ENCODE measurements at regions of chr18 and their contacts with region 1.

Region 1: GRCh38 chr18:59823596-59824195 is 76.1 kb upstream of the PMAIP1 start:
- DNase-seq: peak; percentile 79 to 87
- H3K4me3 ChIP-seq: no peak overlapping the region
- CTCF ChIP-seq: peak in 1 of 3 donors; percentile 82
- POLR2A ChIP-seq: no peak

Region 2: DNA sequence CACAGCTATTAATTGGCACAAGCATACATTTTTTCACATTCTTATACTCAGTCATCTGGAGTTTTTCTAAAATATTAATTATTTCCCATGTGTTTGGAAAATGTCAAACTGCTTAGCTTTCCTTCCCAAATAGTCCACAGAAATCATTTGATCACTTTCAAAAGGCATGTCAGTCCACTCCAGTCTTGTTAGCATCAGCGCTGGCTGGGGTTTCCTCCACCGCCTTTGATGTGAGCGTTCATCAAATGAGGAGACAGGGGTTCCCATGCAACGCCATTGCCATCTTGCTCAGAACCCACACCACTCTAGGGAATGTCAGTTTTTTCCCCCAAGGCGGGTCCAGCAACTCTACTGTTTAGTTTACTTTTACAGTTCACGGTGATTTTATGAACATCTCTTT is 537.4 kb before region 1 on chr18:
- intact Hi-C with region 1: no loop called
- DNase-seq: no peak
- H3K4me3 ChIP-seq: no peak overlapping the region
- CTCF ChIP-seq: no peak
- POLR2A ChIP-seq: no peak

Region 3: DNA sequence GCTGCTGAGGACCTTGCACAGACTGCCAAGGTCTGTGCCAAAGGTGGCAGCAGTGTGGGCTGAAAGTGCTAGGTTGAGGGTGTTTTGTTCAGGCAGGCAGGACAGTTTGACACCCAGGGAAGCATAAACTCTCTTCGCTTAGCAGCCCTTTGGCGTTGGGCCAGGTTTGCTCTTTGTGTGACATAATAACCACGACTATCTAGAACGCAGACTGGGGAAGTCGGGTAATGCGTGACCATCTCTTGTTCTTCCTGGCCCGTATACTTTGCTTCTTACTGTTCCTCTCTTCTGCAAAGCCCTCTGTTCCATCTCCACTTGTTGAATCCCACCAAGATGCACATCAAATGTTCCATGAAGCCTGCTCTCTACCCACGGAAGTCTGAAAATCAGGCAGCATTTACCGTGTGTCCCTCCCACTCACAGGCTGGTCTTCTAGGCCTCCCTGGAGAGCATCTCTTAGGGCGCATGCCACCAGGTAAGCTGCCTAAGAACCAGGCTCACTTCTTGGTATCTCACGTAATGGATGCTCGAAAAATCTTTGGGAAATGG is 367.9 kb before region 1 on chr18:
- intact Hi-C with region 1: loop called (anchors 2 kb)
- DNase-seq: no peak
- H3K4me3 ChIP-seq: no peak overlapping the region
- CTCF ChIP-seq: no peak
- POLR2A ChIP-seq: no peak

Region 4: DNA sequence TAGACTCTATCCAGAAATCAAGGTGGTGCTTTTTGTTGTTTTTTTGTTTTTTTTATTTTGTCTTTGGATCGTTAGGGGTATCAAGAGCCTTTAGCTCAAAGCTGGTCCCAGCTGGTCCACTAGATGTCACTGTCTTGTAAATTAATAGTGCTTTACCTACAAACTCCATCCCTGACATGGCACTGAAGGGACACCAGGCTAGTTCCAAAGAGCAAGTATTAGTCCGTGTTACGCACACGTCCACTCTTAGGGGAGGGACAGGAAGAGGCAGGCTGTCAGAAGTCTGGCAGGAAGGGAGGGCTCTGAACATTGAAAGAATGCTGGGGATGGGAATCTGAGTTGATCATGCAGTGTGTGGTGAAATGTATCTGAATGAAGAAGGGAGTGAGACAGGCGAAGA is 40.6 kb before region 1 on chr18:
- intact Hi-C with region 1: loop called (anchors 2 kb)
- DNase-seq: peak in 1 of 2 donors; percentile 34
- H3K4me3 ChIP-seq: no peak overlapping the region
- CTCF ChIP-seq: no peak
- POLR2A ChIP-seq: no peak

Region 5: GRCh38 chr18:59899298-59900221 is 75.9 kb after region 1 on chr18 and contains the start of gene PMAIP1:
- intact Hi-C with region 1: no loop called
- DNase-seq: peak; percentile 83 to 97
- H3K4me3 ChIP-seq: peak within 1 kb of the TSS; percentile 58
- CTCF ChIP-seq: no peak
- POLR2A ChIP-seq: no peak
- total RNA-seq, gene PMAIP1: 11.8 to 34.3 (median 20.8) TPM

Measured in lower leg skin (tissue), 4 donors.